Left cardiac atrium (tissue), 4 donors: ENCODE measurements at regions of chr1 and their contacts with region 1.

Region 1: GRCh38 chr1:117059678-117060440 is at the start of gene TTF2:
- DNase-seq: peak; percentile 91
- ATAC-seq: peak; percentile 99
- total RNA-seq, gene TTF2: 8.0 to 9.4 TPM

Region 2: GRCh38 chr1:116570358-116571200 is 489.3 kb before region 1 on chr1 and contains the start of gene CD58:
- intact Hi-C with region 1: loop called in 1 of 2 experiments (anchors 5 kb)
- DNase-seq: peak; percentile 94
- ATAC-seq: peak; percentile 94
- total RNA-seq, gene CD58: 19.6 to 21.1 TPM

Region 3: DNA sequence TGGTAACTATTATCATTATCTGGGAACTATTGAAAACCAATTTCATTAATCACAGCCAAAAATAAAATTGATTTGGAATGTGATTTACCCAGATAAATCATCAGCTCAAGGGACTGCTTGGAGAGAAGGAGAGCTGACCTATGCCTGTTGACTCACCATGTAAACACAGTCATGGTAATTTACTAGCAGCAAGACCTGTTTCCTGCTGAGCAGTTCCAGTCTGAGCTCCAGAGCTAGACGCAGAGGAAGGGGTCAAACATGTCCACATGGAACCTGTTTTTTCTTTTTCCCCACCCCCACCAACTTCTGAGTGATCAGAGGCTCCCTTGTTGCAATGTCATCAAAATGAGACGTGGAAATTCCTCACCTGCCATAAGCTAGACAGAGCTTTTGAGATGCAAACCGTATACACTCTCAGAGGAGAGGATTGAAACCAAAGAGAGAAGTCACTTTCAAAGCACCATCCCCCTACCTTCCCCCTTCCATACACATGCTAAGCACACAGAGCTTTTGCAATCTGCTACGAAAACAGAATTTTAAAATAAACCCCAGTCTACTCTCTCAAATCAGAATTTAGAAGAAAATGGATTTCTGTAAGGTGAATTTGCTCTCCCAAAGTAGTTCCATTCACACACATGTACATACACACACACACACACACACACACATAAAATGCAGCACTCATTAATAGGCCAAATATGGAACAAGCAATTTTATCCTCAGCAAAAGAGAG is 206.0 kb before region 1 on chr1:
- intact Hi-C with region 1: loop called in 1 of 2 experiments (anchors 1 kb)
- DNase-seq: no peak
- ATAC-seq: peak in 1 of 2 donors; percentile 73